AG04450 (cell line): ENCODE measurements at regions of chr12 and their contacts with region 1.

Region 1: GRCh38 chr12:77010691-77011548 is 54.4 kb downstream of the E2F7 start:
- DNase-seq: peak; percentile 72
- H3K4me3 ChIP-seq: no peak overlapping the region
- H3K27ac ChIP-seq: no peak overlapping the region
- H3K27me3 ChIP-seq: no peaks in the 10 kb centered on the region
- CTCF ChIP-seq: peak; percentile 100

Region 2: GRCh38 chr12:76810671-76811419 is 200.1 kb before region 1 on chr12:
- CTCF ChIA-PET with region 1: interaction called, 15 read pairs
- POLR2A ChIA-PET with region 1: no interaction called
- DNase-seq: no peak
- H3K4me3 ChIP-seq: no peak overlapping the region
- H3K27ac ChIP-seq: no peak overlapping the region
- H3K27me3 ChIP-seq: no peaks in the 10 kb centered on the region
- CTCF ChIP-seq: no peak

Region 3: DNA sequence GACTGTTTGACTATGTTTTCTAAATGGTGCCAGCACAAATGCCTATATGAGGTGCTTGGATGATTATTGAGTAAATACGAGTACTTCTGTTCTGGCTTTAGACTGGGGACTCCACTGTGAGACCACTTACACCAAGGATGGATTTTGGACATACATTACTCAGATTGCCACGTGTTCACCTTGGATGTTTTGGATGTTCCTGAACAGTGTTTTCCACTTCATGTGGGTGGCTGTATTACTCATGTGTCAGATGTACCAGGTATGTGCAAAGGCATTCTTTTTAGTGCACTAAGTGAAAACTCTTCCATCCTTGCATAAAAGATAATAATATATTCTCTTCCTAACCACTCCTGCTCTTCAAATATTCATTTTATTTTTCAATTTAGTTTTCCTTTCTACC is 162.8 kb before region 1 on chr12:
- CTCF ChIA-PET with region 1: interaction called, 11 read pairs
- POLR2A ChIA-PET with region 1: no interaction called
- DNase-seq: no peak
- H3K4me3 ChIP-seq: no peak overlapping the region
- H3K27ac ChIP-seq: no peak overlapping the region
- H3K27me3 ChIP-seq: no peaks in the 10 kb centered on the region
- CTCF ChIP-seq: no peak

Region 4: GRCh38 chr12:76915361-76916169 is 95.4 kb before region 1 on chr12:
- CTCF ChIA-PET with region 1: interaction called, 12 read pairs
- POLR2A ChIA-PET with region 1: no interaction called
- DNase-seq: no peak
- H3K4me3 ChIP-seq: no peak overlapping the region
- H3K27ac ChIP-seq: no peak overlapping the region
- H3K27me3 ChIP-seq: no peaks in the 10 kb centered on the region
- CTCF ChIP-seq: no peak

Region 5: DNA sequence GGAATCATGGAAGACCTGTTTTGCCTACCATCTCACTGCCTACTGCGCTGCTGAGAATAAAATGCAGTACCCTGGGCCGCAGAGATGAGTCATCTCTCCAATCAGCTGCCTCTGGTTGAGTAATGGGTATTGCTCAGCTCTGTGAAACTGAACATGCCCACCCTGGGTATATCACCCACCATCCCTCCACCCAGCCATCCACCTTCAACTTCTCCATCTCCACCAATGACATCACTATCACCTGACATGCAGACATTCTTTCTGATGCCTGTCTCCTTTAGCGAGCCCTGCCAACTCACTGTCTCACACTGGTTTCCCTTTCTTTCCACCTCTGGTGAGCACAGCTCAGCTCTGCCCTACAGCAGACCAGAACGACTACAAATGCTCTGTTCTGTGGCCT is 20.8 kb after region 1 on chr12:
- CTCF ChIA-PET with region 1: interaction called, 40 read pairs
- POLR2A ChIA-PET with region 1: interaction called, 3 read pairs
- DNase-seq: no peak
- H3K4me3 ChIP-seq: no peak overlapping the region
- H3K27ac ChIP-seq: no peak overlapping the region
- H3K27me3 ChIP-seq: no peaks in the 10 kb centered on the region
- CTCF ChIP-seq: no peak

Region 6: GRCh38 chr12:77273898-77274297 is 263.0 kb after region 1 on chr12:
- CTCF ChIA-PET with region 1: no interaction called
- POLR2A ChIA-PET with region 1: no interaction called
- DNase-seq: no peak
- H3K4me3 ChIP-seq: no peak overlapping the region
- H3K27ac ChIP-seq: no peak overlapping the region
- H3K27me3 ChIP-seq: no peaks in the 10 kb centered on the region
- CTCF ChIP-seq: no peak